ENCODE measurements at regions of chr15 and their contacts with region 1.

Region 1: GRCh38 chr15:89874926-89875564 is 18.7 kb downstream of the AP3S2 start:
- DNase-seq: peak; percentile 88
- H3K4me3 Mint-ChIP-seq: no peak overlapping the region
- H3K27ac Mint-ChIP-seq: no peak overlapping the region
- H3K4me1 Mint-ChIP-seq: no peaks in the 10 kb centered on the region
- H3K27me3 Mint-ChIP-seq: no peaks in the 10 kb centered on the region
- CTCF ChIP-seq: peak; percentile 88

Region 2: GRCh38 chr15:89416141-89416853 is 458.7 kb before region 1 on chr15:
- CTCF ChIA-PET with region 1: no interaction called
- intact Hi-C with region 1: no loop called
- DNase-seq: peak; percentile 91
- H3K4me3 Mint-ChIP-seq: no peak overlapping the region
- H3K27ac Mint-ChIP-seq: no peak overlapping the region
- H3K4me1 Mint-ChIP-seq: no peaks in the 10 kb centered on the region
- H3K27me3 Mint-ChIP-seq: peaks cover 100% of the 10 kb centered on the region
- CTCF ChIP-seq: peak; percentile 98

Region 3: GRCh38 chr15:89750560-89751542 is 124.2 kb before region 1 on chr15 and contains the start of gene MESP1:
- CTCF ChIA-PET with region 1: interaction called, 18 read pairs
- intact Hi-C with region 1: no loop called
- DNase-seq: peak; percentile 98
- H3K4me3 Mint-ChIP-seq: peak within 1 kb of the TSS; percentile 62
- H3K27ac Mint-ChIP-seq: no peak within 1 kb of the TSS
- H3K4me1 Mint-ChIP-seq: peaks cover 25% of the 10 kb centered on the region
- H3K27me3 Mint-ChIP-seq: peaks cover 14% of the 10 kb centered on the region
- CTCF ChIP-seq: peak; percentile 92
- total RNA-seq, gene MESP1: 5.3 and 5.9 TPM in 2 replicates

Region 4: GRCh38 chr15:89857673-89858072 is 17.4 kb before region 1 on chr15:
- CTCF ChIA-PET with region 1: interaction called, 10 read pairs
- intact Hi-C with region 1: no loop called
- DNase-seq: peak; percentile 57
- H3K4me3 Mint-ChIP-seq: peak overlapping the region; percentile 31
- H3K27ac Mint-ChIP-seq: peak overlapping the region; percentile 36
- H3K4me1 Mint-ChIP-seq: peaks cover 32% of the 10 kb centered on the region
- H3K27me3 Mint-ChIP-seq: no peaks in the 10 kb centered on the region
- CTCF ChIP-seq: no peak

Measured in Calu3 (cell line).